Activated T-helper 2 cell treated with anti-CD3 and anti-CD28 coated beads, Interferon-gamma antibody, Interleukin-2, Interleukin-4, amounts not matched to agents 10 μg/mL and 5 μg/mL and 100 μg/mL, durations not matched to agents 14 hours and 24 hours and 36 hours (primary cell): ENCODE measurements at regions of chr5 and their contacts with region 1.

Region 1: DNA sequence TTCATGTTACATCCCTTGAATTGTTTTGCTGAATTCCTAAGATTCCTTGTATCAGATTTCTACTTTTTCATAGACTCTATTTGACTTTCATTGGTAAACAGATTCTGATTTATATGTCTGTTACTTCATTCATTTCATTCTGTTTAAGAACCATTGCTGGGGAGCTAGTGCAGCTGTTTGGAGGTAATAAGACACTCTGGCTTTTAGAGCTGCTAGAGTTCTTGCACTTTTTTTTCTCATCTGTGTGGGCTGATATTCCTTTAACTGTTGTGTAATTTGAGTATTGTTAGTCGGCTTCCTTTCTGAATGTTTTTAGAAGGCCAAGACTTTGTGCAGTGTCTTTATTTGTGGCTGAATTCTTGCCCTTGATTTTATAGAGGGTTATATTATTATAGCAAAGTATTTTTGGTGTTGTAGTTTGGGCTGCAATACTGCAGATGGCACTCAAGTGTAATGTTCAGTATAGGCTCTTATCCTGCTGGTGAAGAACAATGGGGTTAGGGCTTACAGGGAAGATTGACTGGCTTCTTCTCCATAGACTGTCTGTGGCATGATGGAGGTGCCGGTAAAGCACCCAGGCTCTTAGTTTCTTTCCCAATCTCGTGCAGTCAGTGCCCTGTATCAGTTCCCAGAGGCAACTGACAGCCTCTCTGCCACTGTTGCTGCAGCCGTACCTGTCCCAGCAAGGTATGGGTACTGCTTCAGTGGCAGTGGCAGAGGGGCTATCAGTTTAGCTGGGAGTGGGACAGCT is 162.2 kb downstream of the OXCT1 start:
- DNase-seq: no peak
- H3K4me3 Mint-ChIP-seq: no peak overlapping the region
- H3K27ac Mint-ChIP-seq: no peak overlapping the region
- H3K4me1 Mint-ChIP-seq: no peaks in the 10 kb centered on the region
- H3K27me3 Mint-ChIP-seq: peaks cover 31% of the 10 kb centered on the region

Region 2: DNA sequence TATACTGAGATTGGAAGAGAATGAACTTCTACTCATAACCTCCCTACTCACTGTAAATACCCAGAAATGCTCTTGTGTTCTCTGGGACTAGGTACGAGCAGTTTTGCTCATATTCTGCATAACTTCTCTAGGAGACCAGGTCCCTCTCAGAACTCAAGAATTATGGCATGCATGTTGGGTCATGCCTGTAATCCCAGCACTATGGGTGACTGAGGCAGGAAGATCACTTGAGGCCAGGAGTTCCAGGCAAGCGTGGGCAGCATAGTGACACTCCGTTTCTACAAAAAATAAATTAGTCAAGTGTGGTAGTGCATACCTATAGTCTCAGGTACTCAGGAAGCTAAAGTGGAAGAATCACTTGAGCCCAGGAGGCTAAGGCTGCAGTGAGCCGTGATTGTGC is 20.2 kb after region 1 on chr5:
- intact Hi-C with region 1: no loop called
- DNase-seq: no peak
- H3K4me3 Mint-ChIP-seq: no peak overlapping the region
- H3K27ac Mint-ChIP-seq: no peak overlapping the region
- H3K4me1 Mint-ChIP-seq: no peaks in the 10 kb centered on the region
- H3K27me3 Mint-ChIP-seq: no peaks in the 10 kb centered on the region

Region 3: DNA sequence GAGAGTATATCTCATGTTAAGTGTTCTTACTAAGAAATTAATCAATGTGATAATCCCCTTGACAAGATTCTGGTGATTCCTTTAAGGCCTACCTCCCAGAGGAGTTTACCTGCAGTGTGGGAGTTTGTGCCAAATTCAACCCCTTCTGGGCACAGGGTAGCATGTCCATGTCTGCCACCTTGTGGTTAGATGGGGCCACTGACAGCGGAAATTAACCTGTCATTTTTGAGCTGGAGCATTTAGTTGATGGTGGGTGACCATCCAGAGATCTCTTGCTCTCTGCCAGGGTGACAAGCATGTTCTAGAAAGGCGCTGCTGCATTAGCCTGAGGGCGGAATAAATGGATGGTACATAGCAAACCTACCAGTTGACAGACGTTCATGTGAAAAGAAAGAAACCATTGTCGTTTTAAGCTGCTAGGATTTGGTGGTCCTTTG is 349.2 kb after region 1 on chr5:
- intact Hi-C with region 1: loop called (anchors 10 kb)
- DNase-seq: peak; percentile 30
- H3K4me3 Mint-ChIP-seq: no peak overlapping the region
- H3K27ac Mint-ChIP-seq: no peak overlapping the region
- H3K4me1 Mint-ChIP-seq: no peaks in the 10 kb centered on the region
- H3K27me3 Mint-ChIP-seq: peaks cover 9% of the 10 kb centered on the region